HepG2 (cell line): ENCODE measurements at regions of chr16 and their contacts with region 1.

Region 1: DNA sequence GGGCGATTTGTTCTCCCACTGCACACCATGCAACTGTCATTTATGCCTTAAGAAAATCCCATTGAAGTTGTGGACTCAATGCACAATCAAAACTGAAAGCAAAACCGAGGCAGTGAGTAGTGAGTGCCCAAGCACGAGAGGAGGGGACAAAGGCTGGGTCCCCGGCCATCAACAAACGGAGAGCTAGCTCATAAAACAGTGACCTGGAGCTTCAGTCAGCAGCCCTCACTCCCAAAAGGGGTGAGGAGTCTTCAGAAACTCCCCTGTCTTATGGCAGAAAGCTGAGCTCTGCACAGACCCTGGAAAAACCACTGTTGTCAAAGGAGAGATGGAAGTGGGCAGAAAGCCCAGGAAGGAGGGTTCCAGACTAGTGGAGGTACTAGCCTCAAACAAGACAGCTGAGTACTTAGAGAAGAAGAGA is 96.9 kb downstream of the ADCY9 start:
- DNase-seq: no peak
- ATAC-seq: no peak
- H3K4me3 ChIP-seq: peak overlapping the region in 1 of 3 experiments; percentile 30; a peak in 1 of 6 replicates
- H3K27ac ChIP-seq: peak overlapping the region; percentile 41
- H3K4me1 ChIP-seq: peaks cover 64% of the 10 kb centered on the region
- H3K27me3 ChIP-seq: no peaks in the 10 kb centered on the region
- CTCF ChIP-seq: no peak
- EP300 ChIP-seq: no peak
- POLR2A ChIP-seq: no peak
- RAD21 ChIP-seq: no peak

Region 2: DNA sequence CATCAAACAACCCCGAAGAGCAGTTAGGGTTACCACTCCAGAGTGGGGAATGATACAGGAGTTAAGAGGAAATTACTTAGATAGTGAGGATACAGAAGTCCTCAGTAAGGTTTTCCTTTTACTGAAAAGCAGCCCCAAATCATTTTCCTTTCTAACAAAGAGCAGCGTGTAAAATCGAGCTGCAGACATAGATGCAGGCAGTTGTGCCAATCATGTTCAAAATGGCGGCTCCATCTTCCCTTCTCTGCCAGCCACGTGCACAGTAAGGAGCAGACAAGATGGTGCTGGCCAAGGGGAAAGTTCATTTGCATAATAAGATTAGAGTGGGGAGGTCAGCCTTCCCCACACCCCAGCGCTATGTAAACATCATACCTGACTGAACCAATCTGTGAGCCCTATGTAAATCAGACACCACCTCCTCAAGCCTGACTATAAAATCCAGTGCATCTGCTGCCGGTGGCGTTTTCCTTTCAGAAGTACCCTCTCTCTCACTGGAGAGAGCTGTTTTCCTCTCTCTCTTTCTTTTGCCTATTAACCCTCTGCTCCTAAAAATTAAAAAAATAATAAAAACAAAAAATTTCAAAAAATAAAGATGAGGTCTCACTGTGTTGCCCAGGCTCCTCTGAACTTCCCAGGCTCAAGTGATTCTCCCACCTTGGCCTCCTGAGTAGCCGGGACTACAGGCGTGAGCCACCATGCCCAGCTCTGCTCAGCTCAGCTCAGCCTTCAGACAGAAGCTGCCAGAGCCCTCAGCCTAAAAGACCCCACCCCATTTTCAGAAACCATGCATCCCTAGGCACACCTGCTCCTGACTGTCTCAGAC is 225.1 kb after region 1 on chr16:
- CTCF ChIA-PET with region 1: no interaction called
- POLR2A ChIA-PET with region 1: no interaction called
- in situ Hi-C with region 1: no loop called
- intact Hi-C with region 1: loop called (anchors 10 kb)
- DNase-seq: no peak
- ATAC-seq: no peak
- H3K4me3 ChIP-seq: no peak overlapping the region
- H3K27ac ChIP-seq: no peak overlapping the region
- H3K4me1 ChIP-seq: peaks cover 20% of the 10 kb centered on the region
- H3K27me3 ChIP-seq: peaks cover 2 to 39% of the 10 kb centered on the region in 2 experiments
- CTCF ChIP-seq: no peak
- EP300 ChIP-seq: no peak
- POLR2A ChIP-seq: no peak
- RAD21 ChIP-seq: no peak